Posterior cingulate gyrus (tissue), 11 donors: ENCODE measurements at regions of chr11 and their contacts with region 1.

Region 1: DNA sequence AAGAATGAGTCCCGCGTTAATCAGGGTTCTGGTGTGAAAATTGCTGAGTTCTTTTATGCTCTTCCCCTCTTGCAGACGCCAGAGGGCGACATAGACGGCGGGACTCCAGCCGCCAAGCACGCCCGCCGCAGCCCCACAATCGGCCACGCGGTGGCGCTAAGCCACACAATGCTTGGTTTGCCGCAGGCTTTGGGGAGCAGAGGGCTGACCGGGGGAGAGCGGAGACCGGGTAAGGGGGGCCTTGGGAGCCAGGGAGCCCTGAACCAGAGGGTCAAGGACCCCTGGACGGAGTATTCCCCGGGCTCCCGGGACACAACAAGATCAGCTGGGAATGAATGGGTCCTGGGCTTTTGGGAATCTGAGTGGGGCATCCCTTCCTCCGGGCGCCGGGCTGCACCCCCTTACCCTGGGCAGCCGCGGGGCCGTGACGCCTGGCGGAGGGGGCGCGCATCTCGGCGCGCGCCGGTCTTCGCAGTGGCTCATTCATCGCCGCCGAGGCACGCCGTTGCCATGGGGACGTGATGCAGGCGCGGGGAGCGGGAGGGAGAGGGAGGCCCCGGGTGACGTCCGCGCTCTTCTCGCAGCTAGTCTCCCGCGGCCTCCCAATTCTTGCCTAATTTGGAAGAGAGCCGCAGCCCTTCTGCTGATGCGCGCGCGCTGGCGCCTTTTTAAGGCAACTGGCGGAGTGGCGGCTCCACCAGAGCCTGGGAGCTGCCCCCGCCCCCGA is 12.2 kb upstream of the NPAS4 start:
- DNase-seq: peak; percentile 80 to 98 (median 92)

Region 2: DNA sequence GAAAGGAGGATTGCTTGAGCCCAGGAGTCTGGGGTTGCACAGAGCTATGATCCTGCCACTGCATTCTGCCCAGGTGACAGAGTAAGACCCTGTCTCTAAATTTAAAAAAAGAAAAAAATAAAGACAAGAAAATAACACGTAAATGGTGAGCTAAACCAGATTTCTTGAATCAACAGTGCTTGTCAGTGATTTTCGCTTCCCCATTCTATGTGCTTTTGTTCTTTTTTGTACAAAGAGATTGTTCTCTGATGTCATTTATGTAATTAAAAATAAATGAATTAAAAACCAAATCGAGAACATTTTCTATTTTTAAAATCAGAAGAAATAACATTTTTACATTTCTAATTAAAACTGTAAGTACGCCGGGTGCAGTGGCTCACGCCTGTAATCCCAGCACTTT is 17.3 kb before region 1 on chr11:
- intact Hi-C with region 1: no loop called
- DNase-seq: peak in 1 of 10 donors; percentile 3

Region 3: DNA sequence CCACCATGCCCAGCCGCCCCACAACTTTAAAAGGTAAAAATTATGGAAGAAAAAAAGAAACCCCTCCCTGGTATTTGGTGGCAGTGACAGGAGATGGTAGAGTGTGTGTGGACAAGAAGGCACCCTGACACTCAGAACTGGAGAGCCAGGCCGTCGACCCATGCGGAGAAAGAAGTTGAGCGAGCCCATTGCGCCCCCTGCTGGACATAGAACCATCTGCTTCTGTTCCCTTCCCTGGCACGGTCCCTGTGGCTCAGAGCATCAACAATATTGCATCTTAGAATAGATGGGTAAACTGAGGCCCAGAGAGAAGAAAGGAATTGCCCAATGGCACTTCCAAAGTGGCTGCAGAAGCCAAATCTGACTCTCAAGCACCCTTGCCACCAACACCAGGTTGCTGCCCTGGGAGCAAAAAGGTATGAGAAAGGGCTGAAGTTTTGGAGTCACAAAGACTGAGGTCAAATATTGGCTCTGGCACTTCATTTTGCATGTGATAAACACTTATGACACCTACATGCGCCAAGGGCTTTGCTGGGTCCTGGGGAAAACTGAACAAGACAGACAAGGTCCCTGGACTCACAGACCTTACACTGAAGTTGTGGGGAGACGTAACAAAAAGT is 21.4 kb after region 1 on chr11:
- intact Hi-C with region 1: loop called (anchors 1 kb)
- DNase-seq: peak; percentile 63 to 97 (median 82)

Region 4: GRCh38 chr11:66438504-66439466 is 30.1 kb after region 1 on chr11 and contains the start of gene MRPL11:
- intact Hi-C with region 1: loop called (anchors 2 kb)
- DNase-seq: peak; percentile 75 to 98 (median 86)